ENCODE measurements at regions of chr14 and their contacts with region 1.

Region 1: DNA sequence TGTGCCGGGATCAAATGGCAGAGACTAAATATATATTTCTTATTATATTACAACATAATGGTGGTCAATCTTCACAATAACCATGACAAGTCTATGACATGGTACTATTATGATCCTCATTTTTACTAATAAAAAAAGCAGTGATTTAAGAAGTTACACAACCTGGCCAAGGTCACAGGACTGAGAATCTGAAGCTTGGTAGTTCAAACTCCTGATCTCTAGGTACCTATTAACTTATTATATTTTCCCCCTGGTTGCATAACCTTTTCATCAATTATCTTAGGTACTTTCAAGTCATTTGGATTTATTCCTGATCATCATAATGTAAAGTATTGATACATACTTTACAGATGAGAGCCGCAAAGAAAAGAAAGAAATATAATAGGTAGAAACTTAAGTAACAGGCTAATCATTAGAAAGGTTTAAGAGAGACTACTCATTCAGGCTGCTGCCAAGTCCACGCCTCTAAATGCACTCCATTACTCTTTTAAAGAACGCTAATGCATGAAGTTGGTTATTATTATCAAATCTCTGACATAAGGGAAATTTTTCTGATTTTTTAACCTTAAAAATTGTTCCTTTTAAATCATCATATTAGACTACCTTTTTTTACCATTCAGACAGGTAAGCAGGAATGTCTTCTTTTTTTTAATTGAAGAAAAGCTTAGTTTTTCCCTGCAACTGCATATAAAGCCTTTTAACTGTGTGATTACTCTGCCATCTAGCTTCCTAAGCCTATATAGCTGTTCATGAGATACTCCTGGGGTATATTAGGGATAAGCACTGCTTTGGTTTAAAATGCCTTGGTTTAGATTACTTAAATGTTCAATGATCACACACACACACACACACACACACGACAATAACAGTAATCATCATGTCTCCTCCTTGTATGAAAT is 35.6 kb downstream of the RPS29 start:
- DNase-seq: peak in 1 of 2 experiments; percentile 54
- H3K4me3 ChIP-seq: no peak overlapping the region
- H3K27ac ChIP-seq: peak overlapping the region; percentile 28; the same call in 1 of the 2 replicates
- H3K4me1 ChIP-seq: peaks cover 22% of the 10 kb centered on the region
- H3K27me3 ChIP-seq: no peaks in the 10 kb centered on the region
- CTCF ChIP-seq: peak; percentile 73

Region 2: GRCh38 chr14:49461529-49462401 is 88.8 kb before region 1 on chr14:
- CTCF ChIA-PET with region 1: interaction called, 41 read pairs
- POLR2A ChIA-PET with region 1: interaction called, 5 read pairs
- intact Hi-C with region 1: loop called (anchors 2 kb)
- DNase-seq: peak; percentile 43 to 67
- H3K4me3 ChIP-seq: no peak overlapping the region
- H3K27ac ChIP-seq: no peak overlapping the region
- H3K4me1 ChIP-seq: no peaks in the 10 kb centered on the region
- H3K27me3 ChIP-seq: no peaks in the 10 kb centered on the region
- CTCF ChIP-seq: peak; percentile 84

Region 3: DNA sequence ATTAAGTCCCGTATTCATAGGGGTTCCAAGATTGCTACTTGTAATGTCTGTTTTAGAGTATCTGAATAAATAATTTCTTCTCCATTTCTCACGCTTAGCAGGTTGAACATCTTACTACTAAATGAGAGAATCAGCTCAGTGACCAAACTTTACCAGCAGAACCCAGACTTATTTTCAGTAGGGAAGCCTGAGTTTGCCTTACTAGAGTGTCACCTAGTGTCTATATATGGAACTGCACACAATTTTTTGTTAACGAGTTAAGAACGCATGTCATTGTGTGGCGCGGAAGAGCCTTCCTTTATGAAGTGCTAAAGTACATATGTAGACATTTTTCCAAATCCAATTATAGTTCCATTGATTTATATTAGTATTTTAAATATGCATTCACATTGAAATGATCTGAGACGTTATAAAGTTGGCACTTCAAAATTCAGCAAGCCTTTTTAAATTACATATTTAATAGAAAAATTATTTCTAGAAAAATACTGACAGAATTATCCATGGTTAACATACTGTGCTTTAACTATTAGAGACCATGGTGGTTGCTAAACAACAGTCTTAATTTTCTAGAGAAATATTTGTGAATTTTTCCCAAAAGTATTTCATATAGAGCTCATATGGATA is 52.7 kb before region 1 on chr14:
- CTCF ChIA-PET with region 1: interaction called, 12 read pairs
- POLR2A ChIA-PET with region 1: interaction called, 8 read pairs
- intact Hi-C with region 1: no loop called
- DNase-seq: peak in 1 of 2 experiments; percentile 57
- H3K4me3 ChIP-seq: no peak overlapping the region
- H3K27ac ChIP-seq: no peak overlapping the region
- H3K4me1 ChIP-seq: 0 out of 2 replicates have a peak, but pooled peaks cover 2% of the 10 kb centered on the region
- H3K27me3 ChIP-seq: no peaks in the 10 kb centered on the region
- CTCF ChIP-seq: peak; percentile 92

Region 4: DNA sequence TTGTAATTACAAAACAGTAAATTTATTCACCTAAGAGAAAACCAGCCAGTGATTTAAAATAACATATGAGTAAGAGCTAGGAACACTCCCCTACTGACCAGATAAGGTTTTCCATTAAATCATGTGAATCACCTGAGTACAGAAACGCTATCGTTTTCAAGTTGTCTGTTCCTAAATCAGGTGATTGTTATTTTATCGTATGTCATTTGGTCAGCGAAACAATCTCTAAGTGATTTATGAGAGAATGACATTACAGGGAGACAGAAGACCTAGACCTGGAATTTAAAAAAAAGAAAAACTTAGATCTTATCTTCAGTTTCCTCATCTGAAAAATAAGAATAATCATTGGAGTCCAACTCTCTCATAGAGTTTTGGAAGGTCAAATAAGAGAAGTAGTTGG is 11.6 kb before region 1 on chr14:
- CTCF ChIA-PET with region 1: no interaction called
- POLR2A ChIA-PET with region 1: no interaction called
- intact Hi-C with region 1: no loop called
- DNase-seq: no peak
- H3K4me3 ChIP-seq: no peak overlapping the region
- H3K27ac ChIP-seq: no peak overlapping the region
- H3K4me1 ChIP-seq: no peaks in the 10 kb centered on the region
- H3K27me3 ChIP-seq: no peaks in the 10 kb centered on the region
- CTCF ChIP-seq: no peak

Measured in PC-9 (cell line).